ENCODE measurements at regions of chr5 and their contacts with region 1.

Region 1: GRCh38 chr5:148374692-148375360 is 8.9 kb upstream of the FBXO38 start:
- DNase-seq: no peak
- H3K4me3 ChIP-seq: no peak overlapping the region
- H3K27ac ChIP-seq: no peak overlapping the region
- H3K27me3 ChIP-seq: no peaks in the 10 kb centered on the region
- CTCF ChIP-seq: peak; percentile 89

Region 2: DNA sequence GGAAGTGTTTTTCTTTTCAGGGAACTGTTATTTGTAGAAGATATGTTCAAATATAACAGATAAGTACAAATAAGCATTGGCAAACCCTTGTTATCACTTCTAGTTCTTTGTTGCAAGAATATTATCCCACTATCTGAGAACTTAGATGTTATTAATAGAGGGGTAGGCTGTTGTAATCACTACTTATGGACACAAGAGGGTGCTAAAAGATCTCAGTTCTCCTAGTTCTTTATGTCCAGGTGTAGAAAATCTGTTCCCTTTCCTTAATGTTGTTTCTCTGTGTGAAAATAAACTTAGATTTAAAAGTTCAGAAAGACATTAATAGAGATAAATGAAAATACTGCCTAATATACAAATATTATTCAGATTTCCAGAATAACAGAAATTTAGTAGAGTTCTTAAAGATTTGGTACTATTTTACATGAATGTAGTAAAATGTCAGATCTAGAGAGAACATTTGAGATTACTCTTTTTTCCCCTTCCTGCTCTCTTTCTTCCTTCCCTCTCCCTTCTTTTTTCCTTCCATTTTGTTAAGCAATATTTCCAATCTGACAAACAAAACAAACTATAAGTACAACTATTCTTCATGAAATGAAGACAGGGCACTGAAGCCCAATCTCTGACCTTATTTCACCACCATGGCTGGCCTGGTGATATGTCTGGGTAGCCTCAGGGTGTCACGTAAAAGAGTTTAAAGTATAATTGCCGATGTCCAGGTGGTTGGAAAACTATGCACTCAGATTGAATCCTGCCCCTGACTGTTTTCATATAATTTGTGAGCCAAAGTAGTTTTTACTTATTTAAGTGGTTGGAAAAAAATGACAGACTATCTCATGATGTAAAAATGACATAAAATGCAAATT is 424.9 kb before region 1 on chr5:
- CTCF ChIA-PET with region 1: interaction called, 10 read pairs
- POLR2A ChIA-PET with region 1: no interaction called
- DNase-seq: no peak
- H3K4me3 ChIP-seq: no peak overlapping the region
- H3K27ac ChIP-seq: no peak overlapping the region
- H3K27me3 ChIP-seq: no peaks in the 10 kb centered on the region
- CTCF ChIP-seq: peak; percentile 66

Region 3: GRCh38 chr5:148179234-148179824 is 195.5 kb before region 1 on chr5:
- CTCF ChIA-PET with region 1: interaction called, 48 read pairs
- POLR2A ChIA-PET with region 1: no interaction called
- DNase-seq: peak; percentile 32
- H3K4me3 ChIP-seq: no peak overlapping the region
- H3K27ac ChIP-seq: no peak overlapping the region
- H3K27me3 ChIP-seq: peaks cover 2% of the 10 kb centered on the region
- CTCF ChIP-seq: peak; percentile 70

Region 4: GRCh38 chr5:148290271-148291195 is 84.3 kb before region 1 on chr5:
- CTCF ChIA-PET with region 1: interaction called, 27 read pairs
- POLR2A ChIA-PET with region 1: no interaction called
- DNase-seq: no peak
- H3K4me3 ChIP-seq: no peak overlapping the region
- H3K27ac ChIP-seq: no peak overlapping the region
- H3K27me3 ChIP-seq: peaks cover 2% of the 10 kb centered on the region
- CTCF ChIP-seq: peak; percentile 53

Measured in AG04450 (cell line).